ENCODE measurements at regions of chr3 and their contacts with region 1.

Region 1: DNA sequence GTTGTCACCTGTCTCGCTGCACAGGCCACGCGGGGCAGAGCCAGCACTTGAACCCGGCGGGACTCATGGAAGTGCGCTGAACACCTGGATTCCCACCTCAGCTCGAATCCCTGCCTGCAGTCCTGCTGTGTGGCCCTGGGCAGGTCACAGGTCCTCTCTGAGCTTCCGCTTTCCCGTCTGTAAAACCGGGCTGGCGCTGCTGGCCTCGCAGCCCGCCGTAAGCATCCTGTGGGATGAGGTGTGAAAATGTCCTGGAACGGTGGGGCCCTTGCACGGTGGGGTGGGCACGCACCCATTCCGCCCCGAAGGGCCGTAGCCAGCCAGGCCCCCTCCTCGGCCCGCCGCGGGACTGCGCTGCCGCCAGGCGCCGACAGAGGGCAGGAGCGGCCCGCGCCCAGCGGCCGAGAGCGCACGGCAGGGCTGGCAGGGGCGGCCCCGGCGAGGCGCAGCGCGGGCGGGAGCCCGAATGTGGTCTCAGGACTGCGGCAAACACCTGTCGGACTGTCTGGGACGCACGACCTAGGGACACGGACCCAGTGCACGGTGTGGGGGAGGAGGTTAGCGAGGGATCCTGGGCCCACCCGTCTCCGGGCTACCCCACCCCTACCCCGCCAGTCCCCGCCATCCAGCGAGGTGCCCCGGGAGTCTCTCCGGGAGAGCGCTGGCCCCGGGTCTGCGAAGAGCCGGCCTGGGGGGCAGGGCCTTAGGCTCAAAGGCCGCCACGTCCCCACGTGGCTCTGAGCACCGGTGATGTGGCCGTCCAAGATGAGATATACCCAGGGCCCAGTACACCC is 40.4 kb downstream of the DNAJB8 start:
- DNase-seq: peak; percentile 53 to 76 (median 62)
- ATAC-seq: peak; percentile 94
- H3K4me3 ChIP-seq: no peak overlapping the region
- H3K27ac ChIP-seq: peak overlapping the region in 1 of 4 donors; percentile 40
- H3K4me1 ChIP-seq: peaks cover 15% of the 10 kb centered on the region
- H3K27me3 ChIP-seq: no peaks in the 10 kb centered on the region
- CTCF ChIP-seq: peak; percentile 59 to 99 (median 97)
- POLR2A ChIP-seq: peak in 1 of 3 donors; percentile 7

Region 2: GRCh38 chr3:128497387-128498126 is 71.2 kb after region 1 on chr3:
- intact Hi-C with region 1: loop called (anchors 5 kb)
- DNase-seq: peak; percentile 78 to 86 (median 80)
- ATAC-seq: peak; percentile 81
- H3K4me3 ChIP-seq: peak overlapping the region in 1 of 2 donors; percentile 8
- H3K27ac ChIP-seq: no peak overlapping the region
- H3K4me1 ChIP-seq: peaks cover 36% of the 10 kb centered on the region
- H3K27me3 ChIP-seq: no peaks in the 10 kb centered on the region
- CTCF ChIP-seq: peak; percentile 52 to 93 (median 60)
- POLR2A ChIP-seq: peak in 1 of 3 donors; percentile 10

Region 3: GRCh38 chr3:128584412-128585020 is 158.2 kb after region 1 on chr3:
- intact Hi-C with region 1: loop called (anchors 10 kb)
- DNase-seq: peak; percentile 76 to 89 (median 85)
- ATAC-seq: peak; percentile 97
- H3K4me3 ChIP-seq: no peak overlapping the region
- H3K27ac ChIP-seq: no peak overlapping the region
- H3K4me1 ChIP-seq: no peaks in the 10 kb centered on the region
- H3K27me3 ChIP-seq: no peaks in the 10 kb centered on the region
- CTCF ChIP-seq: peak; percentile 67 to 94 (median 88)
- POLR2A ChIP-seq: no peak

Measured in body of pancreas (tissue), 4 donors.